MCF 10A (cell line): ENCODE measurements at regions of chrX and their contacts with region 1.

Region 1: GRCh38 chrX:133415276-133416105 is at the start of gene GPC4:
- DNase-seq: peak; percentile 53
- H3K4me3 Mint-ChIP-seq: peak within 1 kb of the TSS; percentile 88
- H3K27ac Mint-ChIP-seq: no peak within 1 kb of the TSS
- H3K4me1 Mint-ChIP-seq: no peaks in the 10 kb centered on the region
- H3K27me3 Mint-ChIP-seq: peaks cover 52% of the 10 kb centered on the region
- CTCF ChIP-seq: no peak
- total RNA-seq, gene GPC4: 1.4 and 1.9 TPM in 2 replicates

Region 2: GRCh38 chrX:133444951-133445831 is 29.7 kb after region 1 on chrX:
- CTCF ChIA-PET with region 1: no interaction called
- POLR2A ChIA-PET with region 1: interaction called, 4 read pairs
- intact Hi-C with region 1: loop called (anchors 1 kb)
- DNase-seq: peak; percentile 54
- H3K4me3 Mint-ChIP-seq: peak overlapping the region; percentile 68
- H3K27ac Mint-ChIP-seq: peak overlapping the region; percentile 0
- H3K4me1 Mint-ChIP-seq: peaks cover 8% of the 10 kb centered on the region
- H3K27me3 Mint-ChIP-seq: peaks cover 15% of the 10 kb centered on the region
- CTCF ChIP-seq: no peak

Region 3: GRCh38 chrX:133660281-133660680 is 244.8 kb after region 1 on chrX:
- CTCF ChIA-PET with region 1: no interaction called
- POLR2A ChIA-PET with region 1: no interaction called
- intact Hi-C with region 1: loop called (anchors 10 kb)
- DNase-seq: peak; percentile 70
- H3K4me3 Mint-ChIP-seq: no peak overlapping the region
- H3K27ac Mint-ChIP-seq: no peak overlapping the region
- H3K4me1 Mint-ChIP-seq: peaks cover 5% of the 10 kb centered on the region
- H3K27me3 Mint-ChIP-seq: peaks cover 42% of the 10 kb centered on the region
- CTCF ChIP-seq: no peak

Region 4: DNA sequence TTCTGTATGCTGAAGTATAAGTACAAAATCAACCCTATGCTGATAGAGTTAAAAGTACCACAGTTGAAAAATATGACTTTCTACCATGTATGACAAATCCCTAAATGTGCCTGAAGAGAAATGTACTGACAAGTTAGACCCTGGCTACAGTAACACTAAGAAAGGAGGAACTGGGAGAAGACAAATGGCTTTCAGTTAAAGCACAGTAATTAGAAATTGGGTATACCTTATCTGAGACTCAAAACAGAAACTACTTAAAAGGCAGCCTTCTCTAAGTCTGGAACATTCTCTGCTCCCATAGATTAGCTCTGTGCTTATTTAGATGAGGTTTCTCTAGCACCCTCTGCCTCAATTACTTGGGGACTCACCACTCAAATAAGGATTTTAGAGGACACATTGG is 380.8 kb after region 1 on chrX:
- CTCF ChIA-PET with region 1: no interaction called
- POLR2A ChIA-PET with region 1: no interaction called
- intact Hi-C with region 1: no loop called
- DNase-seq: no peak
- H3K4me3 Mint-ChIP-seq: no peak overlapping the region
- H3K27ac Mint-ChIP-seq: no peak overlapping the region
- H3K4me1 Mint-ChIP-seq: no peaks in the 10 kb centered on the region
- H3K27me3 Mint-ChIP-seq: peaks cover 62% of the 10 kb centered on the region
- CTCF ChIP-seq: no peak